Esophagus muscularis mucosa (tissue), 4 donors: ENCODE measurements at regions of chr13 and their contacts with region 1.

Region 1: GRCh38 chr13:83178008-83178407 is 704.3 kb downstream of the SLITRK1 start:
- DNase-seq: no peak
- H3K4me3 ChIP-seq: no peak overlapping the region
- H3K27ac ChIP-seq: no peak overlapping the region
- H3K4me1 ChIP-seq: no peaks in the 10 kb centered on the region
- H3K27me3 ChIP-seq: no peaks in the 10 kb centered on the region
- CTCF ChIP-seq: no peak
- EP300 ChIP-seq: no peak
- POLR2A ChIP-seq: no peak

Region 2: GRCh38 chr13:82947099-82947720 is 230.8 kb before region 1 on chr13:
- intact Hi-C with region 1: no loop called
- DNase-seq: no peak
- H3K4me3 ChIP-seq: no peak overlapping the region
- H3K27ac ChIP-seq: no peak overlapping the region
- H3K4me1 ChIP-seq: no peaks in the 10 kb centered on the region
- H3K27me3 ChIP-seq: no peaks in the 10 kb centered on the region
- CTCF ChIP-seq: no peak
- EP300 ChIP-seq: no peak
- POLR2A ChIP-seq: no peak

Region 3: GRCh38 chr13:83372786-83373185 is 194.8 kb after region 1 on chr13:
- intact Hi-C with region 1: no loop called
- DNase-seq: no peak
- H3K4me3 ChIP-seq: no peak overlapping the region
- H3K27ac ChIP-seq: no peak overlapping the region
- H3K4me1 ChIP-seq: peaks cover 0 to 7% (median 5%) of the 10 kb centered on the region in 4 donors
- H3K27me3 ChIP-seq: no peaks in the 10 kb centered on the region
- CTCF ChIP-seq: no peak
- EP300 ChIP-seq: no peak
- POLR2A ChIP-seq: no peak

Region 4: GRCh38 chr13:83677985-83678384 is 500.0 kb after region 1 on chr13:
- intact Hi-C with region 1: loop called (anchors 5 kb)
- DNase-seq: no peak
- H3K4me3 ChIP-seq: no peak overlapping the region
- H3K27ac ChIP-seq: no peak overlapping the region
- H3K4me1 ChIP-seq: no peaks in the 10 kb centered on the region
- H3K27me3 ChIP-seq: no peaks in the 10 kb centered on the region
- CTCF ChIP-seq: no peak
- EP300 ChIP-seq: no peak
- POLR2A ChIP-seq: no peak